ENCODE measurements at regions of chr17 and their contacts with region 1.

Region 1: DNA sequence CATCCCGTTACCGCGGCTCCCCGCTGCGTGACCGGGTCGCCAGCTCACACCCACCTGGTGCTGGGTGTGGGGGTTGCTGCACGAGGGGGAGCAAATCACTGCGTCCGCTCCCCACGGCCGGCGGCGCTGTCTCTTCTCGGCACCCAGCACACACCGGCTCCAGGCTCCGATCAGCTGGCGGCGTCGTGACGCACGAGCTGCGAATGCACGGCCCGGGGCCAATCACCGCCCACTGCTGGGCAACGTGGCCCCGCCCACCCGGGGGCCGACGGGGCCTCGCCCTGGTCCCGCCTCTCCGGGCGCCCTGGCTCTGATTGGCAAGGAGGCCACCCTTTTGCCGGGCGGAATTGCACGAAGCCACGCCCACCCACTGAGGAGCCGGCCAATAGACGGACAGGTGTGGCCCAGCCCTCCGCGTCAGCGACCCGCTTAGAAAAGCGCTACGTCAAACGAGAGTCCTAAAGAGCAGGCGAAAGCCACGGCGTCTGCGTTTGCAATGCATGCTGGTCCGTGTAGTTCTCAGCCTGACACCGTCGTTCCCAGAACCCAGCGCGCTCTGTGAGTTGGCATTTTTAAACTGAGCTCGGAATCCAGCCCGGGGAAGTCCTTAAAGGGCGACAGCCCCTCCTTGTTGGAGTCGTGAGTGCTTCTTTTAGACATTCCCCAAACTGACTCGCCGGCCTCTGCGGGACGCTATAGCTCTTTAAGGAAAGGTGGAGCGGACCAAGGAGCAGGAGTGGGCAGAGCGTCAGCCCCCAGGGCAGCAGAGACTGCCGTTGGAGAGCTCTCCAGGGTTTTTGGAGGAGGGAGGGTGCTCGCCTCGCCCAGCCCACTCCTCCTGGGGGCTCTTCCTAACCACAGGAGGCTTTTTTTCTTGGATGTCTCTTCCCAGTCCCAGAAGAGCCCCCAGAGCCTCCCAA is 6.2 kb upstream of the TLCD2 start:
- DNase-seq: peak; percentile 100
- H3K4me3 Mint-ChIP-seq: peak overlapping the region; percentile 95
- H3K27ac Mint-ChIP-seq: peak overlapping the region; percentile 96
- H3K4me1 Mint-ChIP-seq: peaks cover 20% of the 10 kb centered on the region
- H3K27me3 Mint-ChIP-seq: peaks cover 18% of the 10 kb centered on the region

Region 2: DNA sequence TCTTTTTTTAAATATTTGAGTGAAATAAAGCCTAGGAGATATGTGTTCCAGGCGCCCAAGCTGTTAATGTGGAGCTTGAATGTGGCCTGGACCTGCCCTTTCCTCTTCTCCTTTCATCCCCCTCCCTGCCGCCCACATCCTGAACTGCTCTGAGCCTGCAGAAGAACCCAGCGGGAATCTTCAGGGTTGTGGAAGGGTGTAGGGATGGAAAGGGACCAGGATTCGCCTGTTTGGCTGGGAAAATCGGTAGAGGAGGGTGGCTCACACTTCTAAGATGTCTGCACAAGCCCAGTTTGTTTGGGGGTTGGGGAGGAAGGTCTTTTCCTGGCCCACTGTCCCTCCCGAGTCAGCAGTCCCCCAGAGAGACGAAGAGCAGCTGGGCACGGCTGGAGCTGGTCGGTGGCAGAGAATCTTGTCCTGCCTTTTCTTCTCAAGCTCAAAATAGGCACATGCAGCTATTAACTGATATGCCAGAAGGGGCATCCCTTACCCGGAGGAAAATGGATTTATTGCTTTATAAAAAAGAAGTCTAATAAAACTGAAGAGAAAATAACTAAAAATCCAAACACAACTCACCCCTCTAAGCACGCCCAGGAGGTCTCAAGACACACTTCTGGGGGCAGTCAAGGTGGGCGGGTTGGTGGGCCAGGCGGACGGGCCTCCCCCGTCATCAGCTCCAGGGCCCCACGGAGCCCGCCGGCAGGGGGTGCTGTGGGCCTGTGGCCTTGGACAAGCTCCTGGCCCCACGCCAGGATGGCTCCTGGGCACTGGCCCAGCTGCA is 142.2 kb before region 1 on chr17:
- intact Hi-C with region 1: no loop called
- DNase-seq: peak; percentile 37
- H3K4me3 Mint-ChIP-seq: no peak overlapping the region
- H3K27ac Mint-ChIP-seq: no peak overlapping the region
- H3K4me1 Mint-ChIP-seq: no peaks in the 10 kb centered on the region
- H3K27me3 Mint-ChIP-seq: no peaks in the 10 kb centered on the region

Region 3: DNA sequence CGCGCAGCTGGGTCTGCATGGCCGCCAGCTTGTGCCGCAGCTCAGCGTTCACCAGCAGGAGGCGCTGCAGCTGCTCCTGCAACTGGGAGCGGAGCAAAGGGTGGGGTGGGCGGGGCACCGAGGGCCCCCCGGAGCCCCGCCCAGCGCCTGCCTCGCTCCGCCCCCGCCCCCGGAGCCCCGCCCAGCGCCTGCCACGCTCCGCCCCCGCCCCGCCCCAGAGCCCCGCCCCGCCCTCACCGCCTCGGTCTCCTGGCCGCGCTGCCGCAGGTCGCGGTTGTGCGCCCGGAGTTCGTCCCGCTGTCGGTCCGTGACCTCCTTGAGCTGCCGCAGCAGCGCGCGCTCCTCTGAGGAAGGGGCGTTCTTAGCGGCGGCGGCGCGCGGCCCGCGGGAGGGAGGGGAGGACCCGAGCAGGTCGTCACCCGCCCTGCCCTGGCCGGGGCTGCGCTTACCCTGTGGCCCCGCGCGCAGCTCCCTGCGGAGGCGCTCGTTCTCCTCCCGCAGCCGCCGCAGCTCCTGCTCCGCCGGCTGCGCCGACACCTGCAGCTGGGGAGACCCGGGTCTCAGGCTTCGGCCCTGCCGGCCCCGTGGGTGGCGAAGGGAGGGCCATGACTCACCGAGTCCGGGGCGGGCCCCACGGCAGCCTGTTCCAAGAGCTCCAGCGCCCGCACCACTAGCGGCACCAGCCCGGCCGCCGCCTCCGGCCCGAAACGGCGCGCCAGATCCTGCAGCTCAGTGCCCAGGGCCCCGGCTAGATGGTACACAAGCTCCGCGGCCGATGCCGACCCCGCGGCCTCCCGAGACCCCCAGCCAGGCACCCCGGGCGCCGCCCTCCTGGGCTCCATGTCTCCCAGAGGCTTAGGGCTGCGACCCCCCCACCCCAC is 67.1 kb before region 1 on chr17:
- intact Hi-C with region 1: loop called (anchors 1 kb)
- DNase-seq: peak; percentile 91
- H3K4me3 Mint-ChIP-seq: peak overlapping the region; percentile 60
- H3K27ac Mint-ChIP-seq: no peak overlapping the region
- H3K4me1 Mint-ChIP-seq: peaks cover 18% of the 10 kb centered on the region
- H3K27me3 Mint-ChIP-seq: no peaks in the 10 kb centered on the region

Region 4: DNA sequence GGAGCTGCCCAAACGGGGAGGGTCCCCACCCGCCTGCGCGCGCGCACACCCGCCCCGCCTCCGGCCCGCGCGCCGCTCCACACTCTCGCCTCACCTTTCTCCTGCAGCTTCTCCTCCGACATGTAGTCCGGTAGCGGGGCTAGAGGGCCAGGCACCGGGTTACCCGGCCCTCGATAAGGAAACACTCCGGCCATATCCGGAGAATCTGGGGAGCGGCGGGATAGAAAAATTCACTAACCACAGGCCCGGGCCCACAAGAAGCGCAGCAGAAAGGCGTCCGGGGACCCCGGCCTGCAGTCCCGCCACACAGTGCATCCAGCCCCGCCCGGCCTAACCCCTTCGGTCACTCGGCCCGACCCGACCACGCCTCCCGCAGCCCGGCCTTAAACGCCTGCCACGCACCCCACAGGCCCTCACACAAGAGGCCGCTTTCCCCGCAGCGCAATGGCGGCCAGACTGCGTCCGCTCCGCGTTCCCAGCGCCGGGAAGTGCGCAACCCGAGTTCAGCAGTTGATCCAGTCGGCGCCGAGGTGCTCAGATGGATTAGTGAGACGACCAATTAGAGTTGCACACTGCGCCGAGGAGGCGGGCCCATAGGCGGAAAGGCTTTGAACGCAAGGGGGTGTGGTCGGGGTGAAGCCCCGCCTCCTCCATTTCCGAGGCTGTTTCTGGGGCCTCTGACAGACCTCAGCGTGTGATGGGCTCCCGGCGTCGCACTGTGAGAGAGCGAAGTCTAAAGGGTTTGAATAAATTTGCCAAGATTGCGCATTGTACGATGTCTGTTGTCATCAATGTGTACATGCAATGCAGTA is 31.8 kb before region 1 on chr17 and contains the start of gene PRPF8:
- intact Hi-C with region 1: loop called (anchors 2 kb)
- DNase-seq: peak; percentile 98
- H3K4me3 Mint-ChIP-seq: peak within 1 kb of the TSS; percentile 98
- H3K27ac Mint-ChIP-seq: peak within 1 kb of the TSS; percentile 94
- H3K4me1 Mint-ChIP-seq: peaks cover 23% of the 10 kb centered on the region
- H3K27me3 Mint-ChIP-seq: no peaks in the 10 kb centered on the region
- total RNA-seq, gene PRPF8: 435 and 439 TPM in 2 replicates

Region 5: GRCh38 chr17:1736348-1737281 is 20.3 kb after region 1 on chr17:
- intact Hi-C with region 1: no loop called
- DNase-seq: no peak
- H3K4me3 Mint-ChIP-seq: no peak overlapping the region
- H3K27ac Mint-ChIP-seq: no peak overlapping the region
- H3K4me1 Mint-ChIP-seq: peaks cover 4% of the 10 kb centered on the region
- H3K27me3 Mint-ChIP-seq: no peaks in the 10 kb centered on the region

Region 6: GRCh38 chr17:1829592-1830257 is 113.4 kb after region 1 on chr17 and contains the starts of genes RPA1 and SMYD4:
- intact Hi-C with region 1: loop called (anchors 2 kb)
- DNase-seq: peak; percentile 89
- H3K4me3 Mint-ChIP-seq: peak within 1 kb of the TSS; percentile 94
- H3K27ac Mint-ChIP-seq: peak within 1 kb of the TSS; percentile 86
- H3K4me1 Mint-ChIP-seq: peaks cover 48% of the 10 kb centered on the region
- H3K27me3 Mint-ChIP-seq: no peaks in the 10 kb centered on the region
- total RNA-seq, gene RPA1: 229 and 243 TPM in 2 replicates
- total RNA-seq, gene SMYD4: 26.9 and 31.0 TPM in 2 replicates

Region 7: DNA sequence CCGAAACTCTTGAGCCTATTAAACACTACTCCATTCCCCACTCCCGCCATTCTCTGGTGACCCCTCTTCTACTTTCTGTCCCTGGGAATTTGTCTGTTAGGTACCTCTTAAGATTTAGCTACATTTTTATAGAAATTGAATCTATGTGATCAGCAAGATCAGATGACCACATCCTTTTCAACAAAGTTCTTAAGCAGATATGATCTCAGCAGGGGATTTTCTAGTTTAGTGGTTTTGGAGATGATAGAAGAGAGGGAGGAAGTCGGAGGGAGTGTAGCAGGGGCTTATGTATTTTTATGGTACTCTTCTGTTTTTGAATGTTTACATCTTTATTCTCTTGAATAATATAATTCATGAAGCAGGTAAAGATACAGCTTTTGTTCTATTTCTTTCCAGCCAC is 154.3 kb after region 1 on chr17:
- intact Hi-C with region 1: loop called (anchors 2 kb)
- DNase-seq: peak; percentile 13
- H3K4me3 Mint-ChIP-seq: peak overlapping the region; percentile 64
- H3K27ac Mint-ChIP-seq: peak overlapping the region; percentile 83
- H3K4me1 Mint-ChIP-seq: peaks cover 64% of the 10 kb centered on the region
- H3K27me3 Mint-ChIP-seq: no peaks in the 10 kb centered on the region

Region 8: GRCh38 chr17:2041561-2042366 is 325.4 kb after region 1 on chr17 and contains the start of gene OVCA2:
- intact Hi-C with region 1: loop called (anchors 5 kb)
- DNase-seq: peak; percentile 96
- H3K4me3 Mint-ChIP-seq: peak within 1 kb of the TSS; percentile 89
- H3K27ac Mint-ChIP-seq: peak within 1 kb of the TSS; percentile 91
- H3K4me1 Mint-ChIP-seq: peaks cover 21% of the 10 kb centered on the region
- H3K27me3 Mint-ChIP-seq: no peaks in the 10 kb centered on the region
- total RNA-seq, gene OVCA2: 29.9 and 35.8 TPM in 2 replicates

Region 9: GRCh38 chr17:2303204-2304188 is 587.2 kb after region 1 on chr17 and contains the starts of genes SMG6 and SRR:
- intact Hi-C with region 1: loop called (anchors 2 kb)
- DNase-seq: peak; percentile 90
- H3K4me3 Mint-ChIP-seq: peak within 1 kb of the TSS; percentile 87
- H3K27ac Mint-ChIP-seq: peak within 1 kb of the TSS; percentile 70
- H3K4me1 Mint-ChIP-seq: peaks cover 25% of the 10 kb centered on the region
- H3K27me3 Mint-ChIP-seq: no peaks in the 10 kb centered on the region
- total RNA-seq, gene SMG6: 33.5 and 43.0 TPM in 2 replicates
- total RNA-seq, gene SRR: 17.3 and 18.4 TPM in 2 replicates

Measured in activated T-helper 2 cell treated with anti-CD3 and anti-CD28 coated beads, Interferon-gamma antibody, Interleukin-2, Interleukin-4, amounts not matched to agents 10 μg/mL and 5 μg/mL and 100 μg/mL, durations not matched to agents 14 hours and 24 hours and 36 hours (primary cell).